OCI-LY7 (cell line): ENCODE measurements at regions of chr9 and their contacts with region 1.

Region 1: GRCh38 chr9:32968101-32969011 is 33.1 kb downstream of the APTX start:
- DNase-seq: peak; percentile 64
- H3K4me3 ChIP-seq: no peak overlapping the region
- H3K27ac ChIP-seq: no peak overlapping the region
- H3K4me1 ChIP-seq: no peaks in the 10 kb centered on the region
- CTCF ChIP-seq: peak; percentile 98

Region 2: DNA sequence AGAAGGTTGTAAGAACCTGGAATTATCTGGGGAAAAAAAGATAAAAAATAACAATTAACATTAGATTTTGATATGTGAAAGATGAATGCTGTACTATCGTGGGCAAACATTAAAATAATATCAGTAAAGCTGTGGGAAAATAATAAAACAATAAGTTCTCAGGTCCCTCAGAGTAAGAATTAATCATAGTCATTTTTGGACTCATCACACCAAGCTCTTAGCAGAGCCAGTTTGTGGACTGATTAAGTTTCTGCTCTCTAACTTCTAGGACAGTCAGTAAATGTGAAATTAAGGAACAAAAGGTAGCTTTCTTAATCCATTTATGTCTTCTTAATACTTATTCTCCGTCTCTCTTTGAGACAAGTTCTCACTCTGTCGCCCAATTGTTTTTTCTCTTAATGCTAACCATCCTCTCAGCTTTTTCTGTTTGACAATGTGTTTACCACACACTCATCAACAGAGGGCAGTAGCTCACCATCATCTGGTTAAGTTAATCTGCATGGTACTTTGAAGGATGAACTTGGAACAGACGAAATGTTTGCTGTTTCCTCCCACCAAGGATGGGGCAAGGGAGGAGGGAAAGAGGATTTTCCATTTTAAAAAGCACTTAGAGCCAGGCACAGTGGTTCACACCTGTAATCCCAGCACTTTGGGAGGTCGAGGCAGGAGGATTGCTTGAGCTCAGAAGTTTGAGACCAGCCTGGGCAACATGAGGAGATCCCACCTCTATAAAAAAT is 589.2 kb before region 1 on chr9:
- CTCF ChIA-PET with region 1: no interaction called
- POLR2A ChIA-PET with region 1: no interaction called
- intact Hi-C with region 1: loop called (anchors 2 kb)
- DNase-seq: peak; percentile 85
- H3K4me3 ChIP-seq: peak overlapping the region; percentile 29
- H3K27ac ChIP-seq: no peak overlapping the region
- H3K4me1 ChIP-seq: peaks cover 27% of the 10 kb centered on the region
- CTCF ChIP-seq: peak; percentile 89

Region 3: GRCh38 chr9:32579706-32580331 is 388.5 kb before region 1 on chr9:
- CTCF ChIA-PET with region 1: no interaction called
- POLR2A ChIA-PET with region 1: interaction called, 5 read pairs
- intact Hi-C with region 1: loop called (anchors 2 kb)
- DNase-seq: peak; percentile 77
- H3K4me3 ChIP-seq: no peak overlapping the region
- H3K27ac ChIP-seq: peak overlapping the region; percentile 7
- H3K4me1 ChIP-seq: peaks cover 43% of the 10 kb centered on the region
- CTCF ChIP-seq: peak; percentile 99

Region 4: DNA sequence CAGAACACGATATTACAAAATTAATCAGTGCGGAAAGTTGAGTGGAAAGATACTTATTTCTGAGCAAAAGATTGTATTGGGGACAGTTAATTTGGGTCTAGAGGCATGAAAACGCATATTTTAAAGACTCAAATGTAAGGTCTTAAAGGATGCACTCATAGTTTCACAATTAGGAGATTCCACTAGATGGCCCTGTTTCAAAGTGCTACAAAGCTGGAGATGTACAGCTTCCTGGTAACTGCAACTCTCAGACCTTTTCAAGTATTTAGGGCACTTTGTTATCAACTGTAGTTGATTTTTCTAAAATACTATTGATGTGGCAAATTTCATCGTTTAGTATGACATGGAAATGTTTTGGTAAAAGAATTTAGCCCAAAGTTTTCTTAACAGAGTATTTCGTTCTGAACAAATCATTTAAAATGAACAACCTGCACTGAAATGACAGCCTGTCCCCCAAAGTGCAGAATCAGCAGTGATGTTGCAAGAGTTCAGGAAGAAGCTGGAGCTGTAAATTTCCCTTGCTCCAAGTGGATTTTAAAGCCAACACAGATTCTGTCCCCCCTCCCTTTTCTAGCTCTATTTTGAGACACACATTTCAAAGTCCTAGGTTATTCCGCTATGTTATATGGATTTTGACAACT is 379.2 kb before region 1 on chr9:
- CTCF ChIA-PET with region 1: no interaction called
- POLR2A ChIA-PET with region 1: interaction called, 3 read pairs
- intact Hi-C with region 1: loop called (anchors 1 kb)
- DNase-seq: peak; percentile 73
- H3K4me3 ChIP-seq: no peak overlapping the region
- H3K27ac ChIP-seq: no peak overlapping the region
- H3K4me1 ChIP-seq: no peaks in the 10 kb centered on the region
- CTCF ChIP-seq: peak; percentile 94

Region 5: GRCh38 chr9:32703635-32704034 is 264.7 kb before region 1 on chr9:
- CTCF ChIA-PET with region 1: no interaction called
- POLR2A ChIA-PET with region 1: no interaction called
- intact Hi-C with region 1: loop called (anchors 10 kb)
- DNase-seq: peak; percentile 33
- H3K4me3 ChIP-seq: no peak overlapping the region
- H3K27ac ChIP-seq: no peak overlapping the region
- H3K4me1 ChIP-seq: no peaks in the 10 kb centered on the region
- CTCF ChIP-seq: peak; percentile 61

Region 6: GRCh38 chr9:32764140-32764539 is 204.2 kb before region 1 on chr9:
- CTCF ChIA-PET with region 1: no interaction called
- POLR2A ChIA-PET with region 1: no interaction called
- intact Hi-C with region 1: loop called (anchors 10 kb)
- DNase-seq: no peak
- H3K4me3 ChIP-seq: no peak overlapping the region
- H3K27ac ChIP-seq: no peak overlapping the region
- H3K4me1 ChIP-seq: no peaks in the 10 kb centered on the region
- CTCF ChIP-seq: no peak

Region 7: GRCh38 chr9:32839013-32839885 is 129.1 kb before region 1 on chr9:
- CTCF ChIA-PET with region 1: no interaction called
- POLR2A ChIA-PET with region 1: no interaction called
- intact Hi-C with region 1: loop called (anchors 10 kb)
- DNase-seq: no peak
- H3K4me3 ChIP-seq: no peak overlapping the region
- H3K27ac ChIP-seq: no peak overlapping the region
- H3K4me1 ChIP-seq: no peaks in the 10 kb centered on the region
- CTCF ChIP-seq: no peak